K562 (cell line): ENCODE measurements at regions of chr10 and their contacts with region 1.

Region 1: DNA sequence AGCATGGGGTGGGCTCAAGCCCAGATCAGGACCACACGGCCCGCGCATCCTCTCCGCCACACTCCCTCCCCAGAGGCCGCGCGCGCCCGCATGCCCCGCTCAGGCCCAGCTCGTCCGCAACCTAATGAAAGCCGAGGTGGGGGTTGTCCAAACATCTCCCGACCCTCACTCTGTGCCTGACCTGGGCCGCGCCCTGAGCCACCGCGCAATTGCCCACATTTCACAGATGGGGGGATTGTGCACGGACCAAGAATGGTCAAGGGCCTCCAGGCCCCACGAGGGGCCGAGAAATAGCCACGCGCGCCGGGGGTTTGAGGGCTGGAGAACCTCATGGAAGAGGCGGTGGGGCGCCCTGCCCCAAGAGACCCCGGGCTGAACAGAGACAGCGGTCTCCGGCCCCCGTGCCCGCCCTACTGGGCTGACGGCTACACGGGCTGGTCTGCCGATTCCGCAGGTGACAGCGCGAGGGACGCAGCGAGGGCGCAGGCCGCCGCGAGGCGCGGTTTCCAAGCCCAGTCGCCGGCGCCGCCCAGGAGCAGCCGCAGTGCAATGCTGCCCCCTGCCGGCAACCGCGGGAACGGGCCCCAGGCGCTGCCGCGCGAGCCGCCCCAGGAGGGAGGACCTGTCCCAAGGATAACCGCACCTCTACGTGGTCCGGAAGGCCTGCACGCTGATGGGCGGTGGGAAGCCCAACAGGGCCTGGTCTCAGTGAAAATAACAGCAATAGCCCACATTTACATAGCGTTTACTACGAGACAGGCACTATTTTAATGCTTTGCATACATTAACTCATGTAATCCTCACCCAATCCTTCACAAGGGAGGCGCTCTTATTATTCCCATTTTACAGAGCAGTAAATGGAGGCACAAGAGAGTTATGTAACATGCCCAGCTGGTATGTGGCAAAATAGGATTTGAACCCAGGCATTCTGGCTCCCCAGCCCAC is 10.5 kb upstream of the GRID1 start:
- DNase-seq: peak; percentile 74 to 79 (median 78)
- ATAC-seq: peak; percentile 99
- H3K4me3 ChIP-seq: no peak overlapping the region
- H3K27ac ChIP-seq: no peak overlapping the region
- H3K4me1 ChIP-seq: peaks cover 0 to 9% of the 10 kb centered on the region in 2 experiments; a peak in 2 of 5 replicates
- H3K27me3 ChIP-seq: peaks cover 0 to 9% of the 10 kb centered on the region in 2 experiments; a peak in 2 of 5 replicates
- CTCF ChIP-seq: peak; percentile 80 to 96 (median 82)
- EP300 ChIP-seq: no peak
- POLR2A ChIP-seq: no peak
- RAD21 ChIP-seq: peak; percentile 80 to 90

Region 2: DNA sequence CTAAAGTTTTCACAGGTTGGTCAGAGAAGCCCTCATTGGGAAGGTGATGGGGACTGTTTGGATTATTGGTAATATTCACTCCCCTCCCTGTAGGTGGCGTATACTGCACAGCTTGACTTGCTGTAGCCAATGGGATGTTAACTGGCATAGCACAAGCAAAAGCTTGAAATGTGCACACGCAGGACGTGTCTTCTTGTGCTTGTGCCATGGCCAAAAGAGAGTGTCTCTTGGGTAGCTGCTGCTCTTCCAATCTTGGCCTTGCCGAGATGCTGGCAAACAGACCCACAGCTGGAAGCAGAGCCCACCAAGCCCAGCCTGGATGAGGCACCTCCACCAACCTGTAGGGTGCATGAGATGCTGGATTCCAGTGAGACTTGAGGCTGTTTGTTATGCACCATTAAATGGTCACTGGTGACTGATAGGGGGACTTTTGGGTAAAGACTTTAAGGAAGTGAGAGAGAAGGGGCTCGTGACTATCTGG is 276.5 kb before region 1 on chr10:
- CTCF ChIA-PET with region 1: no interaction called
- POLR2A ChIA-PET with region 1: no interaction called
- in situ Hi-C with region 1: no loop called
- intact Hi-C with region 1: loop called (anchors 2 kb)
- DNase-seq: peak in 3 of 4 experiments; percentile 46 to 55 (median 51)
- ATAC-seq: peak; percentile 83
- H3K4me3 ChIP-seq: no peak overlapping the region
- H3K27ac ChIP-seq: no peak overlapping the region
- H3K4me1 ChIP-seq: no peaks in the 10 kb centered on the region
- H3K27me3 ChIP-seq: no peaks in the 10 kb centered on the region
- CTCF ChIP-seq: peak; percentile 54 to 59 (median 58); a peak in 5 of 6 replicates
- EP300 ChIP-seq: no peak
- POLR2A ChIP-seq: no peak
- RAD21 ChIP-seq: peak in 1 of 2 experiments; percentile 42; a peak in 2 of 4 replicates

Region 3: GRCh38 chr10:86261941-86262687 is 115.0 kb before region 1 on chr10:
- CTCF ChIA-PET with region 1: no interaction called
- POLR2A ChIA-PET with region 1: no interaction called
- in situ Hi-C with region 1: loop called (anchors 10 kb)
- intact Hi-C with region 1: loop called (anchors 1 kb)
- DNase-seq: peak; percentile 14 to 39 (median 26)
- ATAC-seq: peak; percentile 96
- H3K4me3 ChIP-seq: no peak overlapping the region
- H3K27ac ChIP-seq: no peak overlapping the region
- H3K4me1 ChIP-seq: peaks cover 0 to 4% of the 10 kb centered on the region in 2 experiments; a peak in 1 of 5 replicates
- H3K27me3 ChIP-seq: peaks cover 0 to 6% of the 10 kb centered on the region in 2 experiments; a peak in 1 of 5 replicates
- CTCF ChIP-seq: peak; percentile 38 to 53 (median 41); a peak in 5 of 6 replicates
- EP300 ChIP-seq: no peak
- POLR2A ChIP-seq: no peak
- RAD21 ChIP-seq: peak in 1 of 2 experiments; percentile 38; a peak in 1 of 4 replicates